Naive thymus-derived CD4-positive, alpha-beta T cell (primary cell): ENCODE measurements at regions of chr1 and their contacts with region 1.

Region 1: GRCh38 chr1:192808518-192809306 is at the start of gene RGS2:
- DNase-seq: peak; percentile 79 to 88 (median 85)
- ATAC-seq: peak; percentile 94
- H3K4me3 ChIP-seq: peak within 1 kb of the TSS; percentile 91
- H3K4me3 Mint-ChIP-seq: peak within 1 kb of the TSS; percentile 92 to 99 (median 98)
- H3K27ac ChIP-seq: peak within 1 kb of the TSS; percentile 76
- H3K27ac Mint-ChIP-seq: peak within 1 kb of the TSS; percentile 91 to 98 (median 96)
- H3K4me1 ChIP-seq: peaks cover 0 to 27% of the 10 kb centered on the region in 2 donors
- H3K4me1 Mint-ChIP-seq: peaks cover 17 to 33% (median 26%) of the 10 kb centered on the region in 7 donors
- H3K27me3 ChIP-seq: no peaks in the 10 kb centered on the region
- H3K27me3 Mint-ChIP-seq: peaks cover 0 to 16% (median 0%) of the 10 kb centered on the region in 5 donors
- total RNA-seq, gene RGS2: 3.5 to 317 (median 12.2) TPM

Region 2: GRCh38 chr1:192516776-192517297 is 291.9 kb before region 1 on chr1:
- CTCF ChIA-PET with region 1: no interaction called
- POLR2A ChIA-PET with region 1: no interaction called
- intact Hi-C with region 1: loop called in 1 of 2 experiments (anchors 2 kb)
- DNase-seq: peak in 8 of 9 donors; percentile 46 to 91 (median 87)
- ATAC-seq: peak; percentile 96
- H3K4me3 ChIP-seq: peak overlapping the region; percentile 27
- H3K4me3 Mint-ChIP-seq: peak overlapping the region; percentile 42 to 86 (median 78)
- H3K27ac ChIP-seq: peak overlapping the region; percentile 60
- H3K27ac Mint-ChIP-seq: peak overlapping the region; percentile 77 to 98 (median 93)
- H3K4me1 ChIP-seq: peaks cover 18 to 21% of the 10 kb centered on the region in 2 donors
- H3K4me1 Mint-ChIP-seq: peaks cover 32 to 56% (median 44%) of the 10 kb centered on the region in 7 donors
- H3K27me3 ChIP-seq: no peaks in the 10 kb centered on the region
- H3K27me3 Mint-ChIP-seq: no peaks in the 10 kb centered on the region

Region 3: GRCh38 chr1:192775631-192776030 is 33.1 kb before region 1 on chr1:
- CTCF ChIA-PET with region 1: no interaction called
- POLR2A ChIA-PET with region 1: no interaction called
- intact Hi-C with region 1: no loop called
- DNase-seq: no peak
- ATAC-seq: no peak
- H3K4me3 ChIP-seq: no peak overlapping the region
- H3K4me3 Mint-ChIP-seq: no peak overlapping the region
- H3K27ac ChIP-seq: no peak overlapping the region
- H3K27ac Mint-ChIP-seq: no peak overlapping the region
- H3K4me1 ChIP-seq: no peaks in the 10 kb centered on the region
- H3K4me1 Mint-ChIP-seq: no peaks in the 10 kb centered on the region
- H3K27me3 ChIP-seq: no peaks in the 10 kb centered on the region
- H3K27me3 Mint-ChIP-seq: peaks cover 0 to 8% (median 0%) of the 10 kb centered on the region in 5 donors

Region 4: DNA sequence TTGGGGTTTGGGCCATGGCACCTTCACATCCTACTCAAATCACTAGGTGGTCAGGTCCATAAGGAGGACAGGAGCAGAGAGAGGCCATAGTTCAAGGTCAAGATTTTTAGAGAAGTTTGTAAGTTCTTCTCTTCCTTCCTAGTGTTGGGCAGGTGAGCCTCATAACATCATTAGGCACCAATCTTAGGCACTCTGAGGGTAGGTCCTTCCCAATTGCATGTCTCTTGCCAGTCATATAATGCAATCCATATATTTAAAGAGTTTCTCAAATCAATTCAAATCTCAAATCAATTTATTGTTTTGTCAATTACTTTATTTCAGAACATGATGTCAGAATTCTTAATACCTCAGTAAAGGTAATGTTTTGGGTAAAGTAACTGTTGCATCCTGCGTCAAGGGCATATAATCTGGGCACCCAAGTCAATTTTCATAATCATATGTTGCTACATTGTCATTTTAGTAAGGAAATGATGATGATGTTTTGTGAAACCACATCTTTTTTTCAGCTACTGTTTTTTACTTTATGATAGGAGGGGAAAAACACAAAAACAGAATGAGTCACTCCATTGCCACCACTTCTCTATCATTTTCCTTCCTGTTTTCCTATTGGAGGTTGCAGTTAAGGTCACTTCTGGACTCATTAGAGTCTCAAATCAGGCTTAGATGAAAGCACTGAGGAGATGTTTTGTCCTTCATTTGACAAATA is 127.8 kb after region 1 on chr1:
- CTCF ChIA-PET with region 1: no interaction called
- POLR2A ChIA-PET with region 1: no interaction called
- intact Hi-C with region 1: loop called in 1 of 2 experiments (anchors 1 kb)
- DNase-seq: no peak
- ATAC-seq: peak; percentile 85
- H3K4me3 ChIP-seq: no peak overlapping the region
- H3K4me3 Mint-ChIP-seq: no peak overlapping the region
- H3K27ac ChIP-seq: no peak overlapping the region
- H3K27ac Mint-ChIP-seq: peak overlapping the region in 2 of 9 donors; percentile 47 to 51
- H3K4me1 ChIP-seq: no peaks in the 10 kb centered on the region
- H3K4me1 Mint-ChIP-seq: peaks cover 0 to 20% (median 0%) of the 10 kb centered on the region in 7 donors
- H3K27me3 ChIP-seq: no peaks in the 10 kb centered on the region
- H3K27me3 Mint-ChIP-seq: no peaks in the 10 kb centered on the region

Region 5: GRCh38 chr1:193104906-193105820 is 296.5 kb after region 1 on chr1 and contains the start of gene GLRX2:
- CTCF ChIA-PET with region 1: no interaction called
- POLR2A ChIA-PET with region 1: interaction called, 3 read pairs
- intact Hi-C with region 1: loop called (anchors 1 to 2 kb)
- DNase-seq: peak; percentile 30 to 68 (median 48)
- ATAC-seq: peak; percentile 91
- H3K4me3 ChIP-seq: peak within 1 kb of the TSS; percentile 67
- H3K4me3 Mint-ChIP-seq: peak within 1 kb of the TSS; percentile 91 to 98 (median 94)
- H3K27ac ChIP-seq: peak within 1 kb of the TSS; percentile 57
- H3K27ac Mint-ChIP-seq: peak within 1 kb of the TSS; percentile 75 to 94 (median 81)
- H3K4me1 ChIP-seq: peaks cover 3 to 16% of the 10 kb centered on the region in 2 donors
- H3K4me1 Mint-ChIP-seq: peaks cover 13 to 28% (median 21%) of the 10 kb centered on the region in 7 donors
- H3K27me3 ChIP-seq: no peaks in the 10 kb centered on the region
- H3K27me3 Mint-ChIP-seq: peaks cover 0 to 9% (median 0%) of the 10 kb centered on the region in 5 donors
- total RNA-seq, gene GLRX2: 6.8 to 18.8 (median 11.4) TPM

Region 6: DNA sequence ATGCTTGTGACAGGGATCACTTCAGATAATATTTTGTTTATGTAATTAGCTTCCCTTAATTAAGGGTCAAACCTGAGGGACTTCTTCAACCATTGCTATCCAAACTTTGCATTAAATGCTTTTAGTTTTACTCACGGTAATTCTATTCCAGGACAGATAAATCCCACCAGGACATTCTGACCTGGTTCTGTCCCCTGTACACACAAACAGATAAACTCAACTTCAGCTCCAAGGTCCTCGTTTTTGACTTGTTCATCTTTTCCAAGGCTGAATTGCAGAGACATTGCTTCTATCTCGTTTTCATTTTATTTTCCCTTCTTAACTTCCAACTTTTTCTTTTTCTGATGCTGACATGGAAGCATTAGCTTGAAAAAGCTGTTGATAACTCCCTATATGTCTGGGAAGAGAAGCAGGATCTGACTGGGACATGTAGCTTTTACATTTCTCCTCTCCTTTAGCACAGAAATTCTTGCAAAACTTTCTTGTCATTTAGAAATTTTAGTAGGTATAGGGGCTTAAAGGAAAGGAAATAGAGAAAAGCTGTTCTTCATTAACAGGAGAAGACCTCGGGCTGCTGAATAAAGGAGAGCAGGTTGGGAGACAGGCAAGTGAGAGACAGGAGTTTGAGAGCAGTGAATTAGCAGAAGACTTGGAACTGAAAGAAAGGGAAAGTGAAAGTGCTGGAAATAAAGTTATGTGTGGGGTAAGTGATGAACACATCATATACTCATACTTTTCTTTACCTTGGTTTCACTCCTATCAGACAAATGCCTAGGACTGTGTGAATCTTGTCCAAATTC is 609.4 kb after region 1 on chr1:
- CTCF ChIA-PET with region 1: no interaction called
- POLR2A ChIA-PET with region 1: no interaction called
- intact Hi-C with region 1: loop called (anchors 1 to 10 kb)
- DNase-seq: peak in 7 of 9 donors; percentile 16 to 64 (median 47)
- ATAC-seq: peak; percentile 81
- H3K4me3 ChIP-seq: peak overlapping the region; percentile 45
- H3K4me3 Mint-ChIP-seq: peak overlapping the region; percentile 68 to 93 (median 87)
- H3K27ac ChIP-seq: peak overlapping the region; percentile 58
- H3K27ac Mint-ChIP-seq: peak overlapping the region; percentile 88 to 95 (median 91)
- H3K4me1 ChIP-seq: peaks cover 16 to 19% of the 10 kb centered on the region in 2 donors
- H3K4me1 Mint-ChIP-seq: peaks cover 15 to 57% (median 46%) of the 10 kb centered on the region in 7 donors
- H3K27me3 ChIP-seq: no peaks in the 10 kb centered on the region
- H3K27me3 Mint-ChIP-seq: no peaks in the 10 kb centered on the region